H1 (cell line): ENCODE measurements at regions of chr1 and their contacts with region 1.

Region 1: DNA sequence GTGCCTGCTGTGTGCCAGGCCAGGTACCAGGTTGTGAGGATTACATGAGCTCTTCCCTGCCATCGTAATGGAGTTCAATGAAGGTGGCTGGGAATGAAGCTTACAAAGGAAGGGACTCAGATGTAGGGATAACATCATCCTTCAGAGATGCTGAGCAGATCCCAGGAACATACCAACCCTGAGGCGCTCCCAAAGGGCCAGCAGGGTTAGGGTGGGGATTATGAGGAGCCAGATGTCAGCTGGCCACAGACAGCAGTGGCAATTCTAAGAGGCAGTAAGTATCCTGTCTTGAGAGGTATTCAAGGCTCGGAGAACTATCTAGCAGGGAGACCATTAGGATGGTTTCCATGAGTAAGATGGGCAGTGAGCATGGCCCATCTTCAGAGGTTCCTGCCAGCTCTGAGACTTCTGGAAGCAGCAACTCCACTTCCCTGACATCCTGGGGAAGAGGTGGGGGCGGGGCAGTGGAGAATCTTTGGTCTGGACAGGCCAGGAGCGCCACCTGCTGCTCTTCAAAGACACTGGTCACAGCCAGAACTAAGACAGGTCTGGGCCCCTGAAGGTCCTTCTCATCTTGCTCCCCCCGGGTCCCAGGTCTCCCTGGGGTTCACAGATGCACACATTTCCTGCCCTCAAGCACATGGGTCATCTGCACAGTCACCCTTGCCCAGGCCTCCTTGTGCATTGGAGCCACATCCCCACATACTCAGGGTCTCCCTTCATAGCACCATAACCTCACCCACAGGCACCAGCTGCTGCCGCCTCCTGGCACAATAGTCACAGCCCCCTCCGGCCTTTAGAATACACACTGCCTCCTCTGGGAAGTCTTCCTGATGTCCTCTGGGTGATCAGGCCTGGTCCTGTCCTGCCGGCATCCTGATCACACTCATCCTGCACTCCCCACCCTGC is 2.7 kb upstream of the SDC3 start:
- DNase-seq: peak; percentile 57 to 86
- H3K4me3 ChIP-seq: no peak overlapping the region
- H3K27ac ChIP-seq: no peak overlapping the region
- H3K4me1 ChIP-seq: peaks cover 0 to 22% (median 17%) of the 10 kb centered on the region in 4 experiments; a peak in 6 of 7 replicates
- H3K27me3 ChIP-seq: peaks cover 0 to 20% (median 12%) of the 10 kb centered on the region in 4 experiments; a peak in 4 of 7 replicates
- CTCF ChIP-seq: peak; percentile 84 to 97 (median 88)
- EP300 ChIP-seq: no peak
- POLR2A ChIP-seq: no peak
- RAD21 ChIP-seq: peak; percentile 99 to 100

Region 2: GRCh38 chr1:30779294-30780071 is 131.8 kb before region 1 on chr1:
- CTCF ChIA-PET with region 1: interaction called, 1,519 read pairs
- POLR2A ChIA-PET with region 1: interaction called, 3 read pairs
- DNase-seq: peak; percentile 70 to 100
- H3K4me3 ChIP-seq: no peak overlapping the region
- H3K27ac ChIP-seq: no peak overlapping the region
- H3K4me1 ChIP-seq: peaks cover 0 to 4% (median 2%) of the 10 kb centered on the region in 4 experiments; a peak in 4 of 7 replicates
- H3K27me3 ChIP-seq: no peaks in the 10 kb centered on the region
- CTCF ChIP-seq: peak; percentile 94 to 96 (median 95)
- EP300 ChIP-seq: no peak
- POLR2A ChIP-seq: no peak
- RAD21 ChIP-seq: peak; percentile 97 to 99

Region 3: DNA sequence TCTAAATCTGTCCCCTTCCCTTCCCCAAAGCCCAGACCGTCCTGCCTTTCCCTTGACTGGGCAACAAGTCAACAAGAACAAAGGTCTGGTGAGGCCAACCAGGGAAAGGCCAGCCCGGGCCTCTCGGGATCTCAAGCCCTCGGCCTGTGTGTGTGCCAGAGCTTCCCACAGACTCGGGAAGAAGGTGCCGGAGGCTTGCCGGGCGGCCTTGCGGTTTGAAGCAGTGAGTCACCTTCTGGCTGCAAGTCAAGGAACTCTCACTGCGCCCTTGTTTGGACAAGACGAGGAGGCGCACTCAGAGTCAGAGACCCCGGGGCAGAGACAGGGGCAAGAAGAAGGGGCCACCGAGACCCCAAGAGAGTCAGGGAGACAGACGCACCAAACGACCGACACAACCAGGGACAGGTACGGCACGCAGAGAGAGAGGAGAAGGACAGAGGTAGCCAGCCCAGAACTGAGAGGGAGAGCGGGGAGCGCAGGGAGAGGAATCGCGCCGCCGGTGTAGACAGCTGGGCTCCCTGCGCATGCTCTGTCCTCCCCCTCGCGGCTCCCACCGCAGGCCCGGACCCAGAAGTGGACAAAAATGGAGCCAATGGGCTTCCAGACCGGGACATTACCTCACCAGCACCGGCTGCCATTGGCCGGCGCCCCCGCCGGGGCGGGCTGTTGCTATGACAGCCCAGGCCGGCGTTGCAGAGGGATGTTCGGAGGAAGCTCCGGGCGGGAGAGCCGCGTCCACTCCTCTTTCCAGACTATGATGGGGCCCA is 87.1 kb before region 1 on chr1:
- CTCF ChIA-PET with region 1: interaction called, 26 read pairs
- POLR2A ChIA-PET with region 1: no interaction called
- DNase-seq: peak; percentile 85 to 95
- H3K4me3 ChIP-seq: peak overlapping the region; percentile 43 to 68 (median 53)
- H3K27ac ChIP-seq: no peak overlapping the region
- H3K4me1 ChIP-seq: peaks cover 0 to 13% (median 8%) of the 10 kb centered on the region in 4 experiments; a peak in 6 of 7 replicates
- H3K27me3 ChIP-seq: peaks cover 0 to 17% (median 13%) of the 10 kb centered on the region in 4 experiments; a peak in 5 of 7 replicates
- CTCF ChIP-seq: peak in 1 of 3 experiments; percentile 2; a peak in 1 of 4 replicates
- EP300 ChIP-seq: no peak
- POLR2A ChIP-seq: no peak
- RAD21 ChIP-seq: peak in 1 of 2 experiments; percentile 15; a peak in 1 of 4 replicates

Region 4: GRCh38 chr1:30856260-30856790 is 55.0 kb before region 1 on chr1:
- CTCF ChIA-PET with region 1: interaction called, 56 read pairs
- POLR2A ChIA-PET with region 1: interaction called, 3 read pairs
- DNase-seq: no peak
- H3K4me3 ChIP-seq: no peak overlapping the region
- H3K27ac ChIP-seq: no peak overlapping the region
- H3K4me1 ChIP-seq: peaks cover 15 to 33% (median 24%) of the 10 kb centered on the region in 4 experiments
- H3K27me3 ChIP-seq: no peaks in the 10 kb centered on the region
- CTCF ChIP-seq: no peak
- EP300 ChIP-seq: no peak
- POLR2A ChIP-seq: no peak
- RAD21 ChIP-seq: no peak

Region 5: GRCh38 chr1:30888391-30888790 is 22.9 kb before region 1 on chr1:
- CTCF ChIA-PET with region 1: interaction called, 28 read pairs
- POLR2A ChIA-PET with region 1: interaction called, 3 read pairs
- DNase-seq: no peak
- H3K4me3 ChIP-seq: no peak overlapping the region
- H3K27ac ChIP-seq: no peak overlapping the region
- H3K4me1 ChIP-seq: peaks cover 9 to 29% (median 18%) of the 10 kb centered on the region in 4 experiments
- H3K27me3 ChIP-seq: no peaks in the 10 kb centered on the region; a peak in 1 of 7 replicates
- CTCF ChIP-seq: no peak
- EP300 ChIP-seq: no peak
- POLR2A ChIP-seq: no peak
- RAD21 ChIP-seq: no peak

Region 6: DNA sequence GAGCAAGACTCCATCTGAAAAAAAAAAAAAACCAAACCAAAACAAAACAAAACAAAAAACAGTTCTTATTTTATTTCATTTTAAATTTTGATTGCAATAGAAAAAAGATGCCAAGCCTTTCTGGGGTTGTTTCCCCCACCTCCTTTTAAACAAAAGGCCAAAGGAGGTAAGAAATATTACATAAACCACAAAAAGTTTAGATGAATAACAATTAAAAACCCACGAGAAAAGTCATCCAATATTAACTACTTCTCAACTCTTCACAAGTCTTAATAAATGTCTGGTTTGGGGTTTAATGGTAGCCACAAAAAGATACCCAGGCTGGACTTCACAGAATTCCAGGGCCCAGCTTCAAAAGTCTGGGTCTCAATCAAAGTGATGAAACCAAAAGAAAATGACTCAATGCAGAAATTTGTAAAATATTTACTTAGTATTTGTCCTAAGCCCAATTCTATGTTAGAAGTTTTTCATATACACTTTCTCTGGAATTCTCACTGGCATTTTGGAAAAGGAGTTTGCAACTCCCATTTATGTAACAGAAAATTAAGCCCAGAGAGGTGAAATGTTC is 44.2 kb after region 1 on chr1:
- CTCF ChIA-PET with region 1: no interaction called
- POLR2A ChIA-PET with region 1: no interaction called
- DNase-seq: no peak
- H3K4me3 ChIP-seq: no peak overlapping the region
- H3K27ac ChIP-seq: no peak overlapping the region
- H3K4me1 ChIP-seq: no peaks in the 10 kb centered on the region
- H3K27me3 ChIP-seq: no peaks in the 10 kb centered on the region
- CTCF ChIP-seq: no peak
- EP300 ChIP-seq: no peak
- POLR2A ChIP-seq: no peak
- RAD21 ChIP-seq: no peak

Region 7: GRCh38 chr1:30977105-30977504 is 65.8 kb after region 1 on chr1:
- CTCF ChIA-PET with region 1: no interaction called
- POLR2A ChIA-PET with region 1: no interaction called
- DNase-seq: no peak
- H3K4me3 ChIP-seq: no peak overlapping the region
- H3K27ac ChIP-seq: no peak overlapping the region
- H3K4me1 ChIP-seq: no peaks in the 10 kb centered on the region
- H3K27me3 ChIP-seq: no peaks in the 10 kb centered on the region
- CTCF ChIP-seq: peak in 1 of 3 experiments; percentile 41; a peak in 1 of 4 replicates
- EP300 ChIP-seq: no peak
- POLR2A ChIP-seq: no peak
- RAD21 ChIP-seq: no peak

Region 8: DNA sequence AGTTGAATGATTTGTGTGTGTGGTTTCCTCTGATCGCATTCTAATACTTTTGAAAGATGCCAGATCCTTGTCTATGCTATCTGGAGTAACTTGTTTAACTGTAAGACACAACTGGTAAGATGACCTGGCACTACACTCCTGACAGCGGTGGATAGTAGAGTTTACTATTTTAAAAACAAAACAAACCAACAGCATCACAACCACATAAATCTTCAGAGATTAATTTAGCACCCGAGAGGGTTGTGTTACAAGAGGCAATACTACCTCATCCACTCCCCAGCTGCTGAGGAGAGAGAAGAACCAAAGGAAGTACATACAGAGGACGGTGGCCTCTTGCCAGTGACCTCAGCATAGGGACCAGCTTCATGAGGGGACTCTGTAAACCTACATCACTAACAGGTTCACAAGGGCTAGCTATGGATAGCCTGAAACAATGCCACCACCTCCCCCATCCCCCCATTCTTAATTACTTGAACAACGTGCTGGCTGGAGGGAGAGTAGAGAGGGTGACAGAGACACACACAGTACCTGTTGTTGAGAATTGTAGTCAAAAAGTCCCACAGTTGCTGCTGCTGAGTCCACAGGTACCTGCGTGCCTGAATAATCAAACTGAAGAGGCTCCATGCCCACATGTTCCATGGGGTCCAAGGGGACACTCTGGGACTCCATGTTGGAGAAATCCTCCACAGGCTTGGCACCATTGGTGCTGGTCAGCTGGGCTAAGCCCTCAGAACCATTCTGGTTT is 80.7 kb after region 1 on chr1:
- CTCF ChIA-PET with region 1: no interaction called
- POLR2A ChIA-PET with region 1: no interaction called
- DNase-seq: no peak
- H3K4me3 ChIP-seq: no peak overlapping the region
- H3K27ac ChIP-seq: no peak overlapping the region
- H3K4me1 ChIP-seq: peaks cover 0 to 5% (median 2%) of the 10 kb centered on the region in 4 experiments; a peak in 3 of 7 replicates
- H3K27me3 ChIP-seq: no peaks in the 10 kb centered on the region
- CTCF ChIP-seq: no peak
- EP300 ChIP-seq: no peak
- POLR2A ChIP-seq: no peak
- RAD21 ChIP-seq: no peak

Region 9: DNA sequence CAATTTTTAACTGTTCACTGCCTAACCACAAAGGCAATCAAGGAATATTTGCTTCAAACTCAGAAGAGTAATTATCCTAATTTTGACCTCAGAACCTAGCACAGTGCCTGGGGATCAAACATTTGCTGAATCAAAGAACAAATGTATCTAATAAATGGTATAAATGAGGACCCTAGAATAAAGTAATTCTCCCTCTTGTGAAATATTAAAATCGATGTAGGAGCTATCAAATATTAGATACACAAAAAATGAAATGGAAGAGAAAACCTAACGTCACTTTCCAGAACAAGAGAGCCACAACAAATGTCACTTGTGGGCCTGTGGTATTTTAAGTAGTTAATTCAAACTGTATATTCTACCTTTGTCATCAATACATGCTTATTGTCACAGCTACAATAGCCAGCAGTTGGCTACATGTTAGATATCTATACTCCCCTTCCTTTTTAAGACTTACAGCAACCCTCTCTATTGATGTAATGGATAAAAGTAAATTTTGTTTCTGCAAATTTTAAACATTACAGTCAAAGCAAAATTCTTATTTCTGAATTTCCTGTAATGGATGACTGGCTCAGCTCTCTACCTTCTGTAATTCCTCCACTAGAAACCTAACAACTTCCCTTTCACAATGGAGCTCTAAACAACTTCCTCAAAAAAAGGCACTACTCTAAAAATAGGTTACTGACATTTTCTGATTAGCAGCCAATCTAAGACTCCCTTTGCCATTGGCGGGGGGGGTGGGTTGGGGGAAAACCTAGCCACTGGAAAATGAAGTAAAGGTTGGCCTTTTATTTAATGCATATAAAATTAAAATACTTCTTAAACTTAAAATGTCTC is 116.6 kb after region 1 on chr1:
- CTCF ChIA-PET with region 1: no interaction called
- POLR2A ChIA-PET with region 1: no interaction called
- DNase-seq: no peak
- H3K4me3 ChIP-seq: no peak overlapping the region
- H3K27ac ChIP-seq: no peak overlapping the region
- H3K4me1 ChIP-seq: peaks cover 0 to 11% (median 3%) of the 10 kb centered on the region in 4 experiments; a peak in 2 of 7 replicates
- H3K27me3 ChIP-seq: no peaks in the 10 kb centered on the region
- CTCF ChIP-seq: no peak
- EP300 ChIP-seq: no peak
- POLR2A ChIP-seq: no peak
- RAD21 ChIP-seq: no peak